Mammary epithelial cell (primary cell): ENCODE measurements at regions of chr6 and their contacts with region 1.

Region 1: DNA sequence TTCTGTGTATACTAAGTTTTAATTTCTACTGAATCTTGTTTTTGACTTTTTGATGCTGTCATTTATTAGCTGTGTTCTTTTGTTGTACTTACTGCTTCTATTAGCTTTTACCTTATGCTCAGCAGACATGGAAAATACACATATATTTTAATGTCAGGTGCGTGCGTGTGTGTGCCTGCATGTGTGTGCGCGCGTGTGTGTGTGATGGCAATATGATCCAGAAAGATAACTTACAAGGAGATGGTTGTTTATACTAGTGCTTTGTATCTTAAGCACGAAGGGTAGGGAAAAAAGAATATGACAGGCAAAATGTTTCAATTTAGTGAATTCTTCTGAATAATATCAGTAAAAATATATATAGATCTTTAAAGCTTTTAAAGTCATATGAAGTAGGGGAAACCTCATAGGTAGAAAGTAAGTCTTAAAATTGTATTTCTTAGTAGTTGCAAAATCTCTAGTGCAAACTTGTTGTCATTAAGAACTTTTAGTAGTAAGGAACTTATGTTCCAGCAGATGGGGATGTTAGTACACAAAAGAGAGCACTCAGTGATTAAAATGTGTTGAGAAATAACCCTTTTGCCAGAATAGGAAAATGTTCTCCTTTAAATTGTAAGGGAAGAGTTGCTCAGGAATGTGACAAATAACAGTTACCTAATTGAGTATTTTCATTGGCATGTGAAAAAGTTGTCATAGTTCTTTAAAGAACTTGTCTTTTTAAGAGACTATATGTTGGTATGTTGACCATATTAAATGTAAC is 13.2 kb downstream of the QKI start:
- DNase-seq: peak; percentile 69
- H3K4me3 ChIP-seq: no peak overlapping the region
- H3K27ac ChIP-seq: no peak overlapping the region
- H3K4me1 ChIP-seq: no peaks in the 10 kb centered on the region
- H3K27me3 ChIP-seq: no peaks in the 10 kb centered on the region
- CTCF ChIP-seq: peak; percentile 30 to 49

Region 2: GRCh38 chr6:163554663-163555062 is 127.0 kb after region 1 on chr6:
- CTCF ChIA-PET with region 1: interaction called, 5 read pairs
- dilution Hi-C with region 1: no loop called
- in situ Hi-C with region 1: loop called in 1 of 2 experiments (anchors 25 kb)
- intact Hi-C with region 1: loop called (anchors 1 kb)
- DNase-seq: peak; percentile 21
- H3K4me3 ChIP-seq: no peak overlapping the region
- H3K27ac ChIP-seq: no peak overlapping the region
- H3K4me1 ChIP-seq: no peaks in the 10 kb centered on the region
- H3K27me3 ChIP-seq: no peaks in the 10 kb centered on the region
- CTCF ChIP-seq: peak; percentile 70 to 71

Region 3: DNA sequence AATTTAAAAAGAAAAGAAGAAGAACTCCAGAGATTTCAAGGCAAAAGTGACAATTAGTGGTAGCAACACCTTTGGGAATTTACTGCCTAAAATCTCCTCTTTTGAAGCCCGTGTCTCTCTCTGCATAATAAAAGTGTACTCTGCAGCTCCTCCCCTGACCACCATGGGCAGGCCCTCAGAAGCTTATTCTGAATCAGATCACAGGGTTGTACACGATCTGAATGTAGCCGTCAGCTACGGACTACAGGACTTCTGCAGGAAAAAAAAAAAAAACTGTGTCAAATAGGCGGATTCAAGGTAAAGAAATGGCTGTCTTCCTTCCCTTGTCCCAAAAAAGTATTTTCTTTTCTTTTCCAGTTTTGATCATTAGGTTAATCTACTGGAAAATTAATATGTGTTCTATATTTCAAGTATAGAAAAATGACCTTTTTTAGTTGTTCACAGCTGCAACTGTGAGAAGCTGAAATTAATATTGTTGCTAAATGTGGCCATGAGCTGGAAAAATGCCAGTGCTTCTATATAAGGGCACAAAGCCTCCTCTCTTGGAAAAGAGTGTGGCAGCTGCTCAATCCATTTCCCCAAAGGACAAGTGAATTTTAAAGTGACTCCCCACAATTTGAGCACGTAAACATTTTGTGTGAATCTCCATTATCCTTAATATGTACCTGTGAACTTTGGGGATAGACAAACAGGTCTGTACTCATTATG is 1484.4 kb after region 1 on chr6:
- CTCF ChIA-PET with region 1: no interaction called
- dilution Hi-C with region 1: no loop called
- in situ Hi-C with region 1: loop called in 1 of 2 experiments (anchors 25 kb)
- intact Hi-C with region 1: no loop called
- DNase-seq: no peak
- H3K4me3 ChIP-seq: no peak overlapping the region
- H3K27ac ChIP-seq: no peak overlapping the region
- H3K4me1 ChIP-seq: no peaks in the 10 kb centered on the region
- H3K27me3 ChIP-seq: no peaks in the 10 kb centered on the region
- CTCF ChIP-seq: no peak

Region 4: GRCh38 chr6:164927288-164928056 is 1499.8 kb after region 1 on chr6:
- CTCF ChIA-PET with region 1: no interaction called
- dilution Hi-C with region 1: no loop called
- in situ Hi-C with region 1: loop called in 1 of 2 experiments (anchors 25 kb)
- intact Hi-C with region 1: loop called (anchors 1 kb)
- DNase-seq: peak; percentile 23
- H3K4me3 ChIP-seq: no peak overlapping the region
- H3K27ac ChIP-seq: no peak overlapping the region
- H3K4me1 ChIP-seq: no peaks in the 10 kb centered on the region
- H3K27me3 ChIP-seq: no peaks in the 10 kb centered on the region
- CTCF ChIP-seq: peak; percentile 82 to 96